ENCODE measurements at regions of chr4 and their contacts with region 1.

Region 1: DNA sequence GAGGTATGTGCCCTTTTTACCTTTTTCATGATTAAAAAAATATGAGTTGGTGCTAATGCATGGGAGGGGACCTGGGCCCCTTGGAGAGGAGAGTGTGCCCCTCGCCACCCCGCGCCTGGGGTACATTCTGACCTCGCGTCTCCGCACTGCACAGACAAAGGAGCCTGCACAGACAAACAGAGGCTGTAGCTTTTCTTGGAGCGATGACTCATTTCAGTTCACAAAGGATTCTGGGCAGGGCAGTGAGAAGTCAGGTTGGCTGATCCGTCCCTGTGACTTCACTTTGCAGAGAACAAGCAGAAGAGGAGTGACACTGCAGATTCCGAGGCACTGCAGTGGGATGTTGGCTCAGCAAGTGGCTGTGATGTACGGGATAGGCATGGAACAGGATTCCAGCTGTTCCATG is 82.9 kb downstream of the STOX2 start:
- DNase-seq: peak; percentile 83
- H3K4me3 ChIP-seq: peak overlapping the region; percentile 33
- H3K27ac ChIP-seq: no peak overlapping the region
- H3K4me1 ChIP-seq: peaks cover 11% of the 10 kb centered on the region
- H3K27me3 ChIP-seq: no peaks in the 10 kb centered on the region
- CTCF ChIP-seq: no peak

Region 2: GRCh38 chr4:183173580-183174526 is 814.1 kb before region 1 on chr4:
- CTCF ChIA-PET with region 1: no interaction called
- POLR2A ChIA-PET with region 1: no interaction called
- intact Hi-C with region 1: no loop called
- DNase-seq: peak; percentile 35
- H3K4me3 ChIP-seq: no peak overlapping the region
- H3K27ac ChIP-seq: peak overlapping the region; percentile 7
- H3K4me1 ChIP-seq: peaks cover 57% of the 10 kb centered on the region
- H3K27me3 ChIP-seq: no peaks in the 10 kb centered on the region
- CTCF ChIP-seq: no peak

Region 3: DNA sequence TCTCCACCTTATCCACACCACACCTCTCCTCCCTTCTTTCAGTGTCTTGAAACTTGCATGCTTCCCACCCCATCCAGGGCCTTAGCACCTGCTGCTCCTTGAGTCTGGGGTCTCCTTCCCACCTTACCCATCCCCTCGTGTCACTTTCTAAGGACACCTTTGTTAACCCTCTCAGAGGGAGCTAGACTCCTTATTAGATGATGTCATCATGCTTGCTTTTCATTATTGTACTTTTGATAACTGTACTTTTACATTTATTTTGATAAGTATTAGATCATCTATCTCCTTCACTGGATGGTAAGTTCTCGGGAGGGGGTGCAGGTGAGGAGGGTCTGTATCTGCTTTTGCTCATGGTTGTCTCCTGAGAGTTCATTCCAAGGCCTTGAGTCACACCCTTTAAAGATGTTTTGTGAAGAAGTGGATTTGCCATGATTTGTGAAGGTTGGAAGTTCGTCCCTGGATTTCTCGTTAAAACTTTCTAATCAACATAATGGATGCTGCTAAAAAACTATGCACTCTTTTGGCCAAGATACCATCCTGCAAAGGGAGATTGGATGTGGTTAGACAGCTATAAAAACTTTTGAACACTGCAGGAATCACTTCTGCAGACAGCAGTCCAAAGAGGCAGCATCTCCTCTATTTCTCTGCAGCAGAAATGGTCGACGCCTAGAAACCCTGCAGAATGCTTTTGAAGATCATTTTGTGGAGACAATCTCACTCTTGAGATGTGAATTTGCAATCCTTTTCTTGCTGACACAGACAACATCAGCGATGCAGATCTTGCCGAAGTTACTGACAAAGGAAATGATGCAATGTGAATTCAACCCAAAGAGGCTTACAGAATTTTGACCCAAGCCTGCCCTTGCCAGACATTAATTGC is 160.1 kb after region 1 on chr4:
- CTCF ChIA-PET with region 1: no interaction called
- POLR2A ChIA-PET with region 1: interaction called, 19 read pairs
- intact Hi-C with region 1: no loop called
- DNase-seq: peak; percentile 64
- H3K4me3 ChIP-seq: no peak overlapping the region
- H3K27ac ChIP-seq: peak overlapping the region; percentile 79
- H3K4me1 ChIP-seq: peaks cover 24% of the 10 kb centered on the region
- H3K27me3 ChIP-seq: no peaks in the 10 kb centered on the region
- CTCF ChIP-seq: no peak

Region 4: DNA sequence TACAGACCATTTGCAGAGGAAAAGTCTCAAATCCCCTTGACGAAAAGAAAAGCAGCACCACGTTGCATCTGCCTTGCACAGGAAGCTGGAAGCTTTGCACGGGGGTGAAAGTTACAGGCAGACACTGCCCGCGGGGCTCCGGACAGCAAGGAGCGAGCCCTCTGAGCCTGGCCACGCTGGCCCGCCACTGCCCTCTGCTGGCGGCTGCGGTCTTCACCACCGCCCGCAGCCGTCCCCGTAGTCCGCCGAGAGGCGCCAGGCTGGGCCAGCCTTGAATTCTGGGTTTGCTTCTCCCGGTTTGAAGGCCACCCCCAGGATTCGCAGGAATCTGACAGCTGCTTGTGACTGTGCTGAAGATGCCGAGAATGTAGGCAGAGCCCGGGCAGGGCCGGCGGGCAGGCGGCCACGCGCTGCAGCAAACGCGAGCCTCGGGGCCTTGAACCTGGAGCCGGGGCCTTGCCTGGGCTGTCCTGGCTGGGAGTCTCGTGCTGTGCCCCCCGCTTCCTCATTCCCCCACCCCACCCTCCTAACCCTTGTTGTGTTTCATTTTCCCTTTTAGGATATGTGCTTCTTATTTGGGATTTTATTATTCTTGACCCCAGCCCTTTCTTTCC is 180.5 kb after region 1 on chr4:
- CTCF ChIA-PET with region 1: no interaction called
- POLR2A ChIA-PET with region 1: no interaction called
- intact Hi-C with region 1: loop called (anchors 10 kb)
- DNase-seq: peak; percentile 61
- H3K4me3 ChIP-seq: no peak overlapping the region
- H3K27ac ChIP-seq: no peak overlapping the region
- H3K4me1 ChIP-seq: no peaks in the 10 kb centered on the region
- H3K27me3 ChIP-seq: no peaks in the 10 kb centered on the region
- CTCF ChIP-seq: peak; percentile 97

Measured in A673 (cell line).